ENCODE measurements at regions of chr17 and their contacts with region 1.

Region 1: GRCh38 chr17:78013683-78014467 is 55.4 kb downstream of the TNRC6C start:
- DNase-seq: peak; percentile 46 to 59
- H3K4me3 ChIP-seq: no peak overlapping the region
- H3K4me3 Mint-ChIP-seq: no peak overlapping the region
- H3K27ac Mint-ChIP-seq: no peak overlapping the region
- H3K4me1 ChIP-seq: no peaks in the 10 kb centered on the region
- H3K4me1 Mint-ChIP-seq: no peaks in the 10 kb centered on the region
- H3K27me3 ChIP-seq: no peaks in the 10 kb centered on the region
- H3K27me3 Mint-ChIP-seq: no peaks in the 10 kb centered on the region
- CTCF ChIP-seq: peak; percentile 62 to 79

Region 2: DNA sequence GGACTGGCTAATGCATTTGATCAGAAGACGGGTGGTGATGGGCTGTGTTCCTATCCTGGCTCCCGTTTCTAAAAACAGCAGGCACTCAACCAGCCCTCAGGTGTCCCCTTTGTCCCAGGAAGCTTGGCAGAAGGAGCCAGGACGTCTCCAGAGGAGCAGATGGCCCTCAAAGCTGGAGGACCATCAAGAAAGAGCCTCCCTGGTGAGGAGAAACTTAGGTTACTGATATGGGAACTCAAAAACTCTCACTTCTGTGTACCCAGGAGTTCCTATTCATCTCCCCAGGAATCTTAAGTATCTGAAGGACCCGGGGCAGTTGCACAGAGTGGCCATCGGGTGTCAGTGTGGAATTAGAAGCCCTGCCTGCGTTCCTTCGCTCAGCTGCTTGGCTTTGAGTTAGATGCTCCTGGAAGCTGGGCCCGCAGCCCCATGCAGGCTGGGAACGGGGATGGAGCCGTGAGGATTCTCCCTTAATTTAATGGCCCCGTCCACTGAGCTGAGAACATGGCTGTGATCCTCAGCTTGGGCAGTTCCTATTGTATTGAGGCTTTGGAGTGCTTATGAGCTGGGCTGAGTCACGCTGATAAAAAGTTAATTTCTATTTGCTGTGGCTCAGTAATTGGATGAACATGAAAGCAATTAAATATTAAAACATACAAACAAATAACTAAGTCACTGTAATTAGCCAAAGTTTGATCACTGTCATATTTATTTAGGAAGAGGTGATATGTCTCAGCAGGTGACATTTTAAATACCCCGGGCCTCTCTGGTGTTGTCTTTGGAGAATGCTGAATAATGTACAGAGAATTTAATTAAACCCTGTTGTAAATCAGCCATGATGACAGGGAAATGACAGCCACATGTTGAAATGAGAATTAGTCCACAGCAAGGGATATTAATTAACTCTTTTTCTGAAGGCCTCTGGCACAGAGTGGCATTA is 471.1 kb before region 1 on chr17:
- CTCF ChIA-PET with region 1: interaction called, 15 read pairs
- POLR2A ChIA-PET with region 1: no interaction called
- intact Hi-C with region 1: loop called (anchors 1 kb)
- DNase-seq: peak; percentile 78 to 80
- H3K4me3 ChIP-seq: no peak overlapping the region
- H3K4me3 Mint-ChIP-seq: no peak overlapping the region
- H3K27ac Mint-ChIP-seq: no peak overlapping the region
- H3K4me1 ChIP-seq: no peaks in the 10 kb centered on the region
- H3K4me1 Mint-ChIP-seq: no peaks in the 10 kb centered on the region
- H3K27me3 ChIP-seq: no peaks in the 10 kb centered on the region; the same call in 1 of the 2 replicates
- H3K27me3 Mint-ChIP-seq: peaks cover 21% of the 10 kb centered on the region
- CTCF ChIP-seq: peak; percentile 89 to 94

Region 3: DNA sequence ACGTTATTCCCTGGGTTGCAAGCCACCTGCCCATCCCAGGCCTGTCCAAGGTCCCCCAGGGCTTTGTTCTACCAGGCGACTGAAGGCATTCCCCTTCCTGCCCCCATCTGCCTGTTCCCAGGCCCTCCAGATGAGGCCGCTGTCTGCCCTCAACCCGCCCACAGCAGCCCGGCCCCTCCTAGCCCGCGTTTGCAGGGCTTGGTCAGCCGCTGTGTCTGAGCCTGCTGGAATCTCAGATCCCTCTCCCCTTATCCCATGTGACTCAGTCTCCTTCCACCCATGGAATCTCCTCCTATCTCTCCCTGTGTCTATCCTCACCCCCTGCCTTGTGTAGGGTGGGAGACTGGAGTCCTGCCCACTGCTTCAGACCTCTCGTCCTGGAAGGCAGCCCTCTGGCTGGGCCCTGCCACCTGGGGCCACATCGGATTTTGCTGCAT is 241.4 kb before region 1 on chr17:
- CTCF ChIA-PET with region 1: no interaction called
- POLR2A ChIA-PET with region 1: no interaction called
- intact Hi-C with region 1: loop called (anchors 1 kb)
- DNase-seq: peak; percentile 63 to 70
- H3K4me3 ChIP-seq: no peak overlapping the region
- H3K4me3 Mint-ChIP-seq: no peak overlapping the region
- H3K27ac Mint-ChIP-seq: no peak overlapping the region
- H3K4me1 ChIP-seq: no peaks in the 10 kb centered on the region
- H3K4me1 Mint-ChIP-seq: peaks cover 6% of the 10 kb centered on the region
- H3K27me3 ChIP-seq: no peaks in the 10 kb centered on the region
- H3K27me3 Mint-ChIP-seq: peaks cover 4% of the 10 kb centered on the region
- CTCF ChIP-seq: peak; percentile 65 to 75

Region 4: DNA sequence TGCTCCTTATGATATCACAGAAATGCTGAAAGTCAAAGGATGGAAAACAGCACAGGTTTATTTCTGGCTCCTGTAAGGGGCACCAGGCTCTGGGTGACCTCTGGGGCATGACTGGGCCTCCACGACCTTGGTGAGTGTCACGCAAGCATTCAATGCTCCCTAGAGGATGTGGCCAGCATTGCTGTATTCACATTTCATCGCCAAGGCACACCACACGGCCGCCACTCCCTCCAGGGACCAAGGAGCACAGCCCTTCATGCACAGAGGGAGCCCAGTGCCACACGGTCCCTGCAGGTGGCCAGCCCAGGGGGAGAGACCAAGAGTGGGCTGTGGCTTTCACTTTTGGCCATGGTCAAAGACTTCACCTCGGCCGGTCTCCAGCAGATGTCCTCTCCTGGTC is 192.8 kb before region 1 on chr17:
- CTCF ChIA-PET with region 1: no interaction called
- POLR2A ChIA-PET with region 1: no interaction called
- intact Hi-C with region 1: loop called (anchors 5 kb)
- DNase-seq: peak in 1 of 2 experiments; percentile 24
- H3K4me3 ChIP-seq: no peak overlapping the region
- H3K4me3 Mint-ChIP-seq: no peak overlapping the region
- H3K27ac Mint-ChIP-seq: no peak overlapping the region
- H3K4me1 ChIP-seq: no peaks in the 10 kb centered on the region
- H3K4me1 Mint-ChIP-seq: no peaks in the 10 kb centered on the region
- H3K27me3 ChIP-seq: no peaks in the 10 kb centered on the region
- H3K27me3 Mint-ChIP-seq: peaks cover 18% of the 10 kb centered on the region
- CTCF ChIP-seq: no peak

Region 5: GRCh38 chr17:77881545-77881944 is 132.3 kb before region 1 on chr17:
- CTCF ChIA-PET with region 1: no interaction called
- POLR2A ChIA-PET with region 1: no interaction called
- intact Hi-C with region 1: loop called (anchors 10 kb)
- DNase-seq: no peak
- H3K4me3 ChIP-seq: no peak overlapping the region
- H3K4me3 Mint-ChIP-seq: no peak overlapping the region
- H3K27ac Mint-ChIP-seq: no peak overlapping the region
- H3K4me1 ChIP-seq: peaks cover 3% of the 10 kb centered on the region; the same call in 1 of the 2 replicates
- H3K4me1 Mint-ChIP-seq: peaks cover 11% of the 10 kb centered on the region
- H3K27me3 ChIP-seq: peaks cover 5% of the 10 kb centered on the region
- H3K27me3 Mint-ChIP-seq: peaks cover 19% of the 10 kb centered on the region
- CTCF ChIP-seq: no peak

Measured in Caco-2 (cell line).